Psoas muscle (tissue), 8 donors: ENCODE measurements at regions of chr2 and their contacts with region 1.

Region 1: GRCh38 chr2:46461011-46461674 is 18.2 kb upstream of the TMEM247 start:
- DNase-seq: peak; percentile 76 to 85
- ATAC-seq: peak; percentile 65 to 84 (median 73)
- H3K4me3 ChIP-seq: no peak overlapping the region
- H3K27ac ChIP-seq: no peak overlapping the region
- H3K4me1 ChIP-seq: peaks cover 3% of the 10 kb centered on the region
- H3K27me3 ChIP-seq: no peaks in the 10 kb centered on the region
- CTCF ChIP-seq: peak; percentile 98

Region 2: GRCh38 chr2:45993476-45993991 is 467.6 kb before region 1 on chr2:
- intact Hi-C with region 1: loop called (anchors 2 kb)
- DNase-seq: peak in 1 of 2 donors; percentile 29
- ATAC-seq: peak; percentile 54 to 81 (median 62)
- H3K4me3 ChIP-seq: no peak overlapping the region
- H3K27ac ChIP-seq: no peak overlapping the region
- H3K4me1 ChIP-seq: peaks cover 4% of the 10 kb centered on the region
- H3K27me3 ChIP-seq: no peaks in the 10 kb centered on the region
- CTCF ChIP-seq: peak; percentile 78

Region 3: GRCh38 chr2:46010925-46011490 is 450.1 kb before region 1 on chr2:
- intact Hi-C with region 1: loop called in 1 of 2 experiments (anchors 2 kb)
- DNase-seq: no peak
- ATAC-seq: peak in 1 of 4 donors; percentile 64
- H3K4me3 ChIP-seq: no peak overlapping the region
- H3K27ac ChIP-seq: no peak overlapping the region
- H3K4me1 ChIP-seq: no peaks in the 10 kb centered on the region
- H3K27me3 ChIP-seq: no peaks in the 10 kb centered on the region
- CTCF ChIP-seq: peak; percentile 65

Region 4: DNA sequence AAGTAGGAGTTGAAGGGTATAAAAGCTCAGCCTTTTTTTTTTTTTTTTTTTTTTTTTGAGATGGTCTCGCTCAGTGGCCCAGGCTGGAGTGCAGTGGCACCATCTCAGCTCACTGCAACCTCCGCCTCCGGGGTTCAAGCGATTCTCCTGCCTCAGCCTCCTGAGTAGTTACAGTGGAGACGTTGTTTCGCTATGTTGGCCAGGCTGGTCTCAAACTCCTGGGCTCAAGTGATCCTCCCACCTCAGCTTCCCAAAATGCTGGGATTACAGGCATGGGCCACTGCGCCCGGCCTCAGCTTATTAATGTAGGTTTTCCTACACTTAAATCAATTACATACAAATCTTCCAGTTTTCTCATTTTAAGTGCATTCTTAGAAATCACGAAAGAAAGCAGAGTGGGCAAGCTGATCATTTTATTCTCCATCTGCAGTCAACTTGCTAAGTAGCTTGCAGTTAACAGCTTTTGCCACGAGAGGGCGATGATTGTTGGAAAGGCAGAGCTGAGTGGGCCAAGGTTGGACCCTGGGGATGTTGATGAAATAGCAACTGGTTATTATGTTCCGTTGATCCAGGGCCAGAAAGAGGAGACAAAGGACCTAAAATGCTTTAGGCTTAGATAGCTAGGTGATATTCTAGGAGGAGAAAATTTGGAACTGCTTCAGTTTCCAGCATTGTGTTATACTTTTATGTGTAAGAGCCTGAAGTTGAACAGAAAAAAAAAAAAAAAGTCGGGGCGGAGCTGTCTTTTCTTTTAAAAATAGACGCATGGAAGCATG is 398.3 kb before region 1 on chr2:
- intact Hi-C with region 1: loop called in 1 of 2 experiments (anchors 2 kb)
- DNase-seq: peak; percentile 74 to 79
- ATAC-seq: peak; percentile 58 to 91 (median 76)
- H3K4me3 ChIP-seq: no peak overlapping the region
- H3K27ac ChIP-seq: no peak overlapping the region
- H3K4me1 ChIP-seq: no peaks in the 10 kb centered on the region
- H3K27me3 ChIP-seq: no peaks in the 10 kb centered on the region
- CTCF ChIP-seq: peak; percentile 88

Region 5: GRCh38 chr2:46179037-46179652 is 282.0 kb before region 1 on chr2:
- intact Hi-C with region 1: no loop called
- DNase-seq: peak; percentile 59 to 77
- ATAC-seq: peak; percentile 47 to 86 (median 68)
- H3K4me3 ChIP-seq: no peak overlapping the region
- H3K27ac ChIP-seq: peak overlapping the region; percentile 46
- H3K4me1 ChIP-seq: no peaks in the 10 kb centered on the region
- H3K27me3 ChIP-seq: no peaks in the 10 kb centered on the region
- CTCF ChIP-seq: no peak

Region 6: DNA sequence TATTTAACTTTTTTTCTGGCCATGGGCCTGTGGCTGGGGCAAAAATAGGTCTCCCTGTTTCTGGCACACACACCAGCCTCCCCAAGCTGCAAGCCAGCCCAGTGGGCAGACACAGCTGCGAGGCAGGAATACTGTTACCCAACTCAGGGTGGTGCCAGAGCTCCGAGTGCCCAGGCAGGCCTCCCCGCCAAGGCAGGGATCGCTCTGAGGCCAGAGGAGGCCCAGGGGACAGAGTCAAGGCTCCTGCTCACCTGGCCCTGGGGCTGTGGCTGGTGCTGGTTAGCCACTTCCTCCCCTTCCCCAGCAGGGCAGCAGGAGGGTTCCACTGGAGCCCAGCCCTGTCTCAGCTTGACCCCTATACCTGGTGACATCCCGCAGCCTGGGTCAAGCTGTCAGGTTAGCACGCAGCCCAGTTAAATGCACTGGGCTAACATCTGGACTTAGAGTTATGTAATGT is 231.0 kb before region 1 on chr2:
- intact Hi-C with region 1: loop called in 1 of 2 experiments (anchors 2 kb)
- DNase-seq: peak; percentile 38 to 77
- ATAC-seq: peak; percentile 91 to 99 (median 96)
- H3K4me3 ChIP-seq: no peak overlapping the region
- H3K27ac ChIP-seq: no peak overlapping the region
- H3K4me1 ChIP-seq: peaks cover 12% of the 10 kb centered on the region
- H3K27me3 ChIP-seq: no peaks in the 10 kb centered on the region
- CTCF ChIP-seq: peak; percentile 54

Region 7: DNA sequence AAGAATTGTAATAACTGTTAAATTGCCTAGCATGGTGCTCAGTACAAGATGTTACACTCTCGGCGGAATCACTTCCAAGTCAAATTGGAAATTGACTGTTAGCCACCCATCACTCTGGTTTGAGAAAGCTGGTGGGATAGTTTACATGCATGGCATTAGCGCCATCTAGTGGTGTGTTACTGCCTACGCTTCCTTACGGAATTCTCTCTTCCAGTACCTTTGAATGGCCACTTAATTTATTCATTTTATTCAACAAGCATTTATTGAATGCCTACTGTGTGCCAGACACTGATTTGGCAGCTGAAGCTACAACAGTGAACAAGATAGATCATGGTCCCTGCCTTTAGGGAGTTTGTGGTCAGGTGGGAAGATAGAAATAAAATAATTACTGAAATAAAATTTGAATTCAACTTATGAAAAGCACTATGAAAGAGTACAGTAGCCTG is 189.4 kb after region 1 on chr2:
- intact Hi-C with region 1: loop called (anchors 2 kb)
- DNase-seq: no peak
- ATAC-seq: peak; percentile 77 to 94 (median 84)
- H3K4me3 ChIP-seq: no peak overlapping the region
- H3K27ac ChIP-seq: no peak overlapping the region
- H3K4me1 ChIP-seq: peaks cover 4% of the 10 kb centered on the region
- H3K27me3 ChIP-seq: no peaks in the 10 kb centered on the region
- CTCF ChIP-seq: peak; percentile 96

Region 8: GRCh38 chr2:46989491-46990230 is 528.5 kb after region 1 on chr2:
- intact Hi-C with region 1: no loop called
- DNase-seq: no peak
- ATAC-seq: no peak
- H3K4me3 ChIP-seq: no peak overlapping the region
- H3K27ac ChIP-seq: peak overlapping the region; percentile 55
- H3K4me1 ChIP-seq: peaks cover 46% of the 10 kb centered on the region
- H3K27me3 ChIP-seq: no peaks in the 10 kb centered on the region
- CTCF ChIP-seq: no peak